GM13976 (cell line): ENCODE measurements at regions of chr1 and their contacts with region 1.

Region 1: GRCh38 chr1:226121587-226122400 is 59.3 kb downstream of the H3-3A start:
- DNase-seq: peak; percentile 90
- CTCF ChIP-seq: peak; percentile 93

Region 2: DNA sequence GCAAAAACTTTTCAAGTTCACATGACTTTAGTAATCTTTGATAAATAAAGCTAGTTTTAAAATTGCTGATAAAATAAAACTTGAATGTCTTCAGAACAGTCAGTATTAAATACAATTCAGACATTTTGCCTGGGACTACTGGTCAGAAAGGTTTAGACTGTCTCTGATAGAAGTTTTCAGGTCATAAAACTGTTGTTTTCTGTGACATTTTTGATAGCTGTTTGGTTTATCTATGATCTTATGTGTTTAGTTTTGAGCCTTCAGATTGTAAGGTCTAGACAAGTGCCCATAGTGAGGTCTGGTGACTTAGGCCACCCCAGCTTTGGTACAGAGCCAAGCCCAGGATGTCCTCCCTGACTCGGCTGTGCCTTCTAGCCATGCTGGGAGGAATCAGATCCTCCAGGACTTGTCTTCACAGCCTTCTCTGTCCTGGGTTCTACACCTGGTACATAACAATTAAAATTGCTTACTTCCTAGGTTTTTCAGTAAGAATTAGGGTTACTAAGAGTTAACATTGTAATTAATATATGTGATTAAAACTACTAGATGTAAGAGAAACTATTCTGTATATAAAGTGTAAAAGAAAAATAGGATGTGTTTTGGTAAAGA is 1207.4 kb before region 1 on chr1:
- in situ Hi-C with region 1: no loop called
- DNase-seq: no peak
- CTCF ChIP-seq: no peak

Region 3: GRCh38 chr1:226064816-226065248 is 57.0 kb before region 1 on chr1:
- in situ Hi-C with region 1: loop called (anchors 5 kb)
- DNase-seq: peak; percentile 51
- CTCF ChIP-seq: peak; percentile 68

Region 4: DNA sequence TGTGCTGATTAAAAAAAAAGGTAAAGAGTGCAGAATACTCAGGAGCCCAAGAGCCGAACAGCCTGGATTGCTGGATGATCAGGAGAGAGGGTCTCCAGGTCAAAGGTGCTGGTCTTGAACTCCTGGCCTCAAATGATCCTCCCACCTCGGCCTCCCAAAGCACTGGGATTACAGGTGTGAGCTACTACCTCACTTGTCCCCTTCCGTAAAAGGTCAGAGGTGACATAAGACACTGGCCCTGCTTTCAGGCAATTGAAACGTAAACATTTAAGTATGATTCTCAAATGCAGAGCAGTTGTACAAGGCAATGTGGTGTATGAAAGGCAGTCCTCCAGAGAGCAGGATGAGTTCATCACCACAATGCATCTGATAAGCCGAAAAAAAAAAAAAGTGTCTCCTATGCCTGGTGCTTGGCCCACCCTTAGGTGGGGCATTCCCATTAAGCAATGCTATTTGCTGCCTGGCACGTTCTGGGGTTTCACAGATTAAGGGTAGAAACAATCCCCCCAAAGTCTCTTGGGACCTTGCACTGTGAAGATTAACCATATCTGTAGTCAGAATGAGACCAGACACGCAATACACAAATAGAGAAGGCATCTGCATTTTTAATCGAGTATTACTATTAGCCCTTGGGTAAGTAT is 238.4 kb after region 1 on chr1:
- in situ Hi-C with region 1: no loop called
- DNase-seq: peak; percentile 55
- CTCF ChIP-seq: no peak

Region 5: GRCh38 chr1:226575739-226576378 is 454.1 kb after region 1 on chr1:
- in situ Hi-C with region 1: no loop called
- DNase-seq: no peak
- CTCF ChIP-seq: no peak